GM23248 (cell line): ENCODE measurements at regions of chr2 and their contacts with region 1.

Region 1: GRCh38 chr2:150466741-150467620 is 20.5 kb downstream of the RND3 start:
- DNase-seq: peak; percentile 82
- H3K4me3 ChIP-seq: peak overlapping the region; percentile 32
- H3K27ac ChIP-seq: peak overlapping the region; percentile 95
- H3K4me1 ChIP-seq: peaks cover 71% of the 10 kb centered on the region
- H3K27me3 ChIP-seq: no peaks in the 10 kb centered on the region

Region 2: DNA sequence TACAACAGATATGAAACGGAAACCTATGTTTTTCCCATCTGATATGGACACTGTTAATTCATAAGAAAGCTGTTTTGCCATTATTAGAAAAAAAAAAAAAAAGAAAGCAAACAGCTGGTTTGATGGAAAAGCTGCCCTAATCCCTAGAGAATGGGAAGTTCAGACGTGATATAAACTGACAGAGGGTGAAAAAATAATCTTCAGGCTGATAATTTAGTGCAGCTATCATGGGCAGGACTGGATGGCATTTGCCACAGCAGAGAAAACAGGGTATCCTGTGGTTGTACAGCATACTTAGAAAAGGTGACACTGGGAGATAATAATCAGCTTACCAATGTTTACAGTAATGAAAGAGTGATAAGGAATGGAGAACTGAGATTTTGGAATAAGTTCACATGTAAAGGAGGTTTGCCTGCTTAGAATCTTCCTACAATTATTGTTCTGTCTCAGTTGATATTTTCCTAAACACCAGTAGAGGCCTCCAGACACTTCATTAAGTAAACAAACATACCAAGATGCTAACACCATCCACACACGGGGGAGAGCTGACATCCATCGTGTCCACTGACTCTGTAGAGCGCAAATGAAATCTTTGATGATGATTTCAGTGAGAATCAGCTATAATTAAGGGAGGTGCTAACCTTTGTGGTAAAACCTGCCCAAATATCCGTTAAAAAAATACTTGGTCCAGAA is 667.8 kb before region 1 on chr2:
- in situ Hi-C with region 1: loop called (anchors 10 kb)
- DNase-seq: peak; percentile 69
- H3K4me3 ChIP-seq: no peak overlapping the region
- H3K27ac ChIP-seq: no peak overlapping the region
- H3K4me1 ChIP-seq: no peaks in the 10 kb centered on the region
- H3K27me3 ChIP-seq: no peaks in the 10 kb centered on the region

Region 3: GRCh38 chr2:150309311-150310032 is 157.5 kb before region 1 on chr2:
- in situ Hi-C with region 1: no loop called
- DNase-seq: no peak
- H3K4me3 ChIP-seq: no peak overlapping the region
- H3K27ac ChIP-seq: no peak overlapping the region
- H3K4me1 ChIP-seq: no peaks in the 10 kb centered on the region
- H3K27me3 ChIP-seq: no peaks in the 10 kb centered on the region

Region 4: GRCh38 chr2:150371044-150371812 is 95.8 kb before region 1 on chr2:
- in situ Hi-C with region 1: no loop called
- DNase-seq: no peak
- H3K4me3 ChIP-seq: no peak overlapping the region
- H3K27ac ChIP-seq: no peak overlapping the region
- H3K4me1 ChIP-seq: no peaks in the 10 kb centered on the region
- H3K27me3 ChIP-seq: no peaks in the 10 kb centered on the region